ENCODE measurements at regions of chr18 and their contacts with region 1.

Region 1: GRCh38 chr18:9653390-9653789 is 39.0 kb upstream of the PPP4R1 start:
- DNase-seq: peak in 1 of 2 experiments; percentile 69
- H3K4me3 ChIP-seq: no peak overlapping the region
- H3K27ac ChIP-seq: peak overlapping the region; percentile 83
- H3K4me1 ChIP-seq: peaks cover 57% of the 10 kb centered on the region
- H3K27me3 ChIP-seq: no peaks in the 10 kb centered on the region
- CTCF ChIP-seq: no peak

Region 2: DNA sequence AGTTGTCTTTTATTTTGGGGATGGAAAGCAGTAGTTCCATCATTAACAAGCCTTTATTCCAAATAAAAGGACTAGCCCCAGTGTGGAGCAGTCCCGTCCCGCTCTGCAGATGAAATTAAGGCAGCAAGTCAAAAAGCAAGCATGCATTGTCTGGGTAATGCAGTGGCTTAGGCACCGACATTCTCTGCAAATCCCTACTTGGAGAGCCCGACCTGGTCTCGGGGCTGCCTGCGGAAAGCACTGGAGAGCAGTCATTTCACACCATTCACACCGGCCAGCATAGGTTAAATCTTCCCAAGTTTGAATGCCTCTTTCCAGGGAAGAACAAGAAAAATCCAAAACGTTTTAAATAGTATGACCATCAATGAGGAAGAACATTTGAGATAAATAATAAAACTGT is 1068.6 kb before region 1 on chr18:
- CTCF ChIA-PET with region 1: no interaction called
- POLR2A ChIA-PET with region 1: interaction called, 17 read pairs
- intact Hi-C with region 1: no loop called
- DNase-seq: no peak
- H3K4me3 ChIP-seq: no peak overlapping the region
- H3K27ac ChIP-seq: no peak overlapping the region
- H3K4me1 ChIP-seq: no peaks in the 10 kb centered on the region
- H3K27me3 ChIP-seq: peaks cover 22% of the 10 kb centered on the region; the same call in 1 of the 2 replicates
- CTCF ChIP-seq: no peak

Region 3: DNA sequence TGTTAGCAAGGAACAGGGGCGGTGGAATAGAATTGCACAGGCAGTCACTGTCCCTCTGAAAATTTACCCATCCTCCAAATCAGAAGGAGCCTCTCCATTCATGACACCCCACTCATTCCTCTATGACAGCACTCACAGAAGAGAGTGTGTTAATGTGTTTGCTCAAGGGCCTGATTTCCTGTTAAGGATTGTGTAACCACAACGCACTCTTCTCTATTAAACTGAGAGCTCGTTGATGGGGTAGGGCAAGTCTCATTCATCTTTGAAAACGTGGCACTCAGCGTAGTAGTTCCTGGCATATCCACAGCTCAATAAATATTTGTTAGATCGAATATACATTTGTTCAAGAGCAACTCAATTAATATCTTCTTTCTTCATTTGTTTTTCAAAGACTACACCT is 366.8 kb after region 1 on chr18:
- CTCF ChIA-PET with region 1: no interaction called
- POLR2A ChIA-PET with region 1: no interaction called
- intact Hi-C with region 1: no loop called
- DNase-seq: no peak
- H3K4me3 ChIP-seq: no peak overlapping the region
- H3K27ac ChIP-seq: no peak overlapping the region
- H3K4me1 ChIP-seq: peaks cover 43% of the 10 kb centered on the region
- H3K27me3 ChIP-seq: no peaks in the 10 kb centered on the region
- CTCF ChIP-seq: no peak

Measured in PC-9 (cell line).